ENCODE measurements at regions of chr2 and their contacts with region 1.

Region 1: GRCh38 chr2:102020596-102021181 is 28.9 kb downstream of the IL1R2 start:
- DNase-seq: peak; percentile 92
- ATAC-seq: peak; percentile 95

Region 2: DNA sequence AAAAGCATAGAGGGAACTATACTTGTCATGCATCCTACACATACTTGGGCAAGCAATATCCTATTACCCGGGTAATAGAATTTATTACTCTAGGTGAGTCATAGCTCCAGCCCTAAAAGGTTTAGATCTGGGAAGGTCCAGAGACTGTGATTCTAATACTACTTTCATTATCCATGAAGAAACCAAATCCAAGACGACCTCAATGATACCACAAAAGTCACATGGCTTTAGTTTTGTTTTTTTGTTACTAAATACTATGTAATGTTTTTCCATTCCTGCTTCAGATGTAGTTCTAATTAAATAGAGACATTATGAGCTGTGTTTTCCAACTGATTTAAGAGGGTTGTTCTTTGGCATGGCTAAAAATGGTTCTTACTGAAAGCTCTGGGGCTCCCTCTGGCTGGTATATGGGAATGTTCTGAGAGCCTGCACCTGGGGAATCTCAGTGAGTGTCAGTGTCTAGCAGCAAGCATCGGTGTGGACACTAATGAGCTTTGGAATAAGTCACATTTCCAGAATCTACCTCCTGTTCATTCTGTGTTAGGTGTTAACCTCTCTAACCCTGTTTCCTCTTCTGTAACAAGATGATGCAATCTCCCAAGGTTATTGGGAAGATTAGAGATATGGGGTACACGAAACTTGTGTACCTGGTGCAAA is 145.6 kb after region 1 on chr2:
- intact Hi-C with region 1: loop called (anchors 2 kb)
- DNase-seq: no peak
- ATAC-seq: peak; percentile 90

Measured in left ventricle myocardium superior (tissue), 1 donor.